ENCODE measurements at regions of chr10 and their contacts with region 1.

Region 1: DNA sequence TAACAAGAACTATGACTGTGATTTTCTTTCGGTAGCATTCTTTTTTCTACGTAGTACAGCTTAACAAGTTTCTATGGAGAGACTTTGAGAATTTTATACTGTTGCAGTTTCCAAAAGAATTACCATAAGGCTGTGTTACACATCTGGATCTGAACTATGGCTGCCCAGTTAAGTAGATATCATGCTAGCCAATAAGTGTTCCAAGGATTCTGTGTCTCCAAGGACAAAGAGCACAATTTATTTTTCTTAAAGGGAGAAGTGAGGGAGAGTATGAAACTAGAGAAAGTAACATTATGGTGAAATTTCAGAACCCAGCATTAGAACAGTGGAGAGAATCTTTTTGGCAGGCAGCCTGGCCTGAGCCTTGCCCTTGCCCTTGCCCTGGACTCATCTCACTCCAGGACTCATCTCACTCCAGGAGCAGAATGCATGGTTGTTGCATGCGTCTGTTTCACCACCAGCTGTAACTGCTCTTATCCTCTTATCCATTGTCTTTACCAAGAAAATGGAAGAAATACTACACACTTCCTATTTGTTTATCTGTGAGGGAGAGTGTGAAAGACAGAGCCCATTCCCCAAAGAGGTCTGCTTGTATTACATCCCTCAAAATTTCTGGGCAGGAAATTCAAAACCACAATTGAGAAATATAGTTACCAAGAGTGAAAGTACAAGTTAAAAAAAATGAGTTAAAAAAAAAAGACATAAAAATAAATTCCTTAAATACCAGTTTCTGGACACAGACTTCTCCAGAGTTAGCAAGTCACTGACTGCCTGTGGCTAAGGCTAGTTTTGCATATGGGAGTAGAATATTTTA is 1067.5 kb downstream of the NRG3 start:
- DNase-seq: peak; percentile 66
- ATAC-seq: peak; percentile 95

Region 2: DNA sequence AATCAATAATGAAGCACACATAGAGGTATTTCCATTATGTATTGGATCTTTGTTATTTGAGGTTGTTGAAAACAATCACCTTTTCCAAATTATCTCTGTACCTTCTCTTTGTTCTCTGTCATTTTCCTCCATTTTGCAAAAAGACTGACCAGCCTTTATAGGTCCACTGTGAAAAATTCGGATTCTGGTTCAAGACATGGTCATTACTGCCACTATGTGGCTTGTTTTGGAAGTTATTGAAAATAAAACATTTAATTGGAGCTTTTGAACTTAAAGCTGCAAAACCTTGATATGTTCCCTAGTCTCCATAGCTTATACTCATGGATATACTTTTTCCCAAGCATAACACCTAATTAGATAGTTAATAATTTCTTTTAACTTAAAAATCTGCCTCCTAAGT is 26.9 kb after region 1 on chr10:
- intact Hi-C with region 1: loop called (anchors 1 kb)
- DNase-seq: no peak
- ATAC-seq: no peak